Mammary epithelial cell (primary cell): ENCODE measurements at regions of chr19 and their contacts with region 1.

Region 1: GRCh38 chr19:50889638-50890037 is 16.4 kb downstream of the KLK2 start:
- DNase-seq: no peak
- H3K4me3 ChIP-seq: no peak overlapping the region
- H3K27ac ChIP-seq: no peak overlapping the region
- H3K4me1 ChIP-seq: peaks cover 11% of the 10 kb centered on the region
- H3K27me3 ChIP-seq: no peaks in the 10 kb centered on the region
- CTCF ChIP-seq: no peak

Region 2: GRCh38 chr19:50794439-50795237 is 95.0 kb before region 1 on chr19:
- CTCF ChIA-PET with region 1: no interaction called
- dilution Hi-C with region 1: loop called (anchors 5 kb)
- in situ Hi-C with region 1: no loop called
- intact Hi-C with region 1: no loop called
- DNase-seq: peak; percentile 43
- H3K4me3 ChIP-seq: no peak overlapping the region
- H3K27ac ChIP-seq: no peak overlapping the region
- H3K4me1 ChIP-seq: no peaks in the 10 kb centered on the region
- H3K27me3 ChIP-seq: no peaks in the 10 kb centered on the region
- CTCF ChIP-seq: peak; percentile 20 to 47

Region 3: GRCh38 chr19:50844296-50844935 is 45.2 kb before region 1 on chr19:
- CTCF ChIA-PET with region 1: no interaction called
- dilution Hi-C with region 1: loop called (anchors 5 kb)
- in situ Hi-C with region 1: no loop called
- intact Hi-C with region 1: no loop called
- DNase-seq: no peak
- H3K4me3 ChIP-seq: no peak overlapping the region
- H3K27ac ChIP-seq: no peak overlapping the region
- H3K4me1 ChIP-seq: no peaks in the 10 kb centered on the region
- H3K27me3 ChIP-seq: peaks cover 4% of the 10 kb centered on the region
- CTCF ChIP-seq: no peak

Region 4: DNA sequence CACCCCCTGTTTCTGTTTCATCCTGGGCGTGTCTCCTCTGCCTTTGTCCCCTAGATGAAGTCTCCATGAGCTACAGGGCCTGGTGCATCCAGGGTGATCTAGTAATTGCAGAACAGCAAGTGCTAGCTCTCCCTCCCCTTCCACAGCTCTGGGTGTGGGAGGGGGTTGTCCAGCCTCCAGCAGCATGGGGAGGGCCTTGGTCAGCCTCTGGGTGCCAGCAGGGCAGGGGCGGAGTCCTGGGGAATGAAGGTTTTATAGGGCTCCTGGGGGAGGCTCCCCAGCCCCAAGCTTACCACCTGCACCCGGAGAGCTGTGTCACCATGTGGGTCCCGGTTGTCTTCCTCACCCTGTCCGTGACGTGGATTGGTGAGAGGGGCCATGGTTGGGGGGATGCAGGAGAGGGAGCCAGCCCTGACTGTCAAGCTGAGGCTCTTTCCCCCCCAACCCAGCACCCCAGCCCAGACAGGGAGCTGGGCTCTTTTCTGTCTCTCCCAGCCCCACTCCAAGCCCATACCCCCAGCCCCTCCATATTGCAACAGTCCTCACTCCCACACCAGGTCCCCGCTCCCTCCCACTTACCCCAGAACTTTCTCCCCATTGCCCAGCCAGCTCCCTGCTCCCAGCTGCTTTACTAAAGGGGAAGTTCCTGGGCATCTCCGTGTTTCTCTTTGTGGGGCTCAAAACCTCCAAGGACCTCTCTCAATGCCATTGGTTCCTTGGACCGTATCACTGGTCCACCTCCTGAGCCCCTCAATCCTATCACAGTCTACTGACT is 34.8 kb before region 1 on chr19 and contains the start of gene KLK3:
- CTCF ChIA-PET with region 1: no interaction called
- dilution Hi-C with region 1: no loop called
- in situ Hi-C with region 1: no loop called
- intact Hi-C with region 1: no loop called
- DNase-seq: no peak
- H3K4me3 ChIP-seq: no peak within 1 kb of the TSS
- H3K27ac ChIP-seq: no peak within 1 kb of the TSS
- H3K4me1 ChIP-seq: no peaks in the 10 kb centered on the region
- H3K27me3 ChIP-seq: peaks cover 6% of the 10 kb centered on the region
- CTCF ChIP-seq: no peak
- total RNA-seq, gene KLK3: not detected